Motor neuron (in vitro differentiated cells): ENCODE measurements at regions of chr2 and their contacts with region 1.

Region 1: GRCh38 chr2:149597668-149598326 is 10.2 kb upstream of the MMADHC start:
- ATAC-seq: peak; percentile 80 to 97 (median 95)
- H3K4me3 ChIP-seq: peak overlapping the region; percentile 1 to 28 (median 8)
- H3K27ac ChIP-seq: peak overlapping the region; percentile 4 to 14
- H3K4me1 ChIP-seq: peaks cover 0 to 12% of the 10 kb centered on the region in 2 donors

Region 2: DNA sequence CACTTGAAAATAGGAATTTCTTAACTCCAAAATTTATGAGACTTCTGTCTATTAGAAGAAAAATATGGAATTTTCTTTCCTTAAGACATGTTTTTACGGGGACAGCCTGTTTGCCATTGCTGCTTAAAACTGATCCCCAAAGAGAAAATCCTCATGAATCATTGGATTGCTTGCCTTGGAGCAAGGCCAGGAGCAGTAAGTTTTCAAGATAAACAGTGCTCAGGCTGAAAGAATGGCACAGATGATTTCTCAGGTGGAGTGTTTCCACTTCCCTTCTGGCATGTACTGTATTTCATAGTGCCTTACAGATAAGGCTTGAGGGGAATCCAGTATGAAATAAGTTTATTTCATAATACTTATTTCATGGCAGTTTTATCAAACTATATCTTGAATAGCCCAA is 64.0 kb after region 1 on chr2:
- in situ Hi-C with region 1: no loop called
- ATAC-seq: peak in 1 of 8 experiments; percentile 54
- H3K4me3 ChIP-seq: no peak overlapping the region
- H3K27ac ChIP-seq: no peak overlapping the region
- H3K4me1 ChIP-seq: no peaks in the 10 kb centered on the region

Region 3: DNA sequence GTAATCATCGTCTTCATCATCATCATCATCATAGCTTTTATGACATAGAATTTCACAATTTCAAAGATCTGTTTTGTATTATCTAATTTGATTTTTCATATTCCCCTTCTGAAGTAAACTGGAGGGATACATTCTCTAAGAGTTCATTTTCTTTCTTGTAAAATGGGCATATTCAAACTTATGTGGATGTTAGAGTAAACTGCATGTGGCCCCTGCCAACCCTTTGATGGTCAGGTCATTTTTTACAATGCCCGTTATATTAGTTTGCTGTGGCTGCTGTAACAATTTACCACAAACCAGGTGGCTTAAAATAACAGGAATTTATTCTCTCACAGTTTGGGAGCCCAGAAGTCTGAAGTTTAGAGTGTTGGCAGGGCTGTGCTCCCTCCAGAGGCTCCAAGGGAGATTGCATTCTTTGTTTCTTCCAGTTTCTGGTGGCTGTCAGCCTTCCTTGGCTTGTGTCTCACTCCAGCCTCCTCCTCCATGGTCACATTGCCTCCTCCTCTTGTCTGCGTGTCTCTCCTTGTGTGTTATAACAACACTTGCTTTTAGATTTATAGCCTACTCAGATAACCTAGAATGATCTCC is 117.3 kb after region 1 on chr2:
- in situ Hi-C with region 1: loop called in 2 of 9 experiments (anchors 10 to 25 kb)
- ATAC-seq: peak in 3 of 8 experiments; percentile 88 to 96 (median 96)
- H3K4me3 ChIP-seq: no peak overlapping the region
- H3K27ac ChIP-seq: no peak overlapping the region
- H3K4me1 ChIP-seq: peaks cover 0 to 1% of the 10 kb centered on the region in 2 donors

Region 4: DNA sequence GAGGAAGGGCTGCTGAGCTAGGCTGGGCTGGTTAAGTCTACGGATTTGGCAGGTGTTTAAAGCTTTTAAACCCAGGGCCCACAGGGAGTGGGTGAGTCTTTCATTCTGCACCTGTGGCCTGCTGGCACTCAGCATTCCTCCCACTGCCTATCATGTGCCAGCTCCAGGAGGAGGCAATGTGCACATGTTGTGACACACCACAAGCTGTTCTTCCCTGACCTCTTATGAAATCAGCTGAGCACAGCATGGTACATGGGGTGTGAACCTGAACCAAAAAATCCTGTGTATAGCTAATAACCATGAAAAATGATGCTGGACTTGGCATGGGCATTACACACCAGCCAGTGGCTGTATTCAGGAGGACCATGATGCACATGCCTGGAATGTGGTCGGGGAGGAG is 287.7 kb after region 1 on chr2:
- in situ Hi-C with region 1: no loop called
- ATAC-seq: no peak
- H3K4me3 ChIP-seq: no peak overlapping the region
- H3K27ac ChIP-seq: no peak overlapping the region
- H3K4me1 ChIP-seq: no peaks in the 10 kb centered on the region

Region 5: GRCh38 chr2:150271952-150272802 is 674.4 kb after region 1 on chr2:
- in situ Hi-C with region 1: loop called in 1 of 9 experiments (anchors 25 kb)
- ATAC-seq: peak in 2 of 8 experiments; percentile 81
- H3K4me3 ChIP-seq: no peak overlapping the region
- H3K27ac ChIP-seq: no peak overlapping the region
- H3K4me1 ChIP-seq: no peaks in the 10 kb centered on the region

Region 6: GRCh38 chr2:150610671-150611279 is 1013.0 kb after region 1 on chr2:
- in situ Hi-C with region 1: loop called in 1 of 9 experiments (anchors 25 kb)
- ATAC-seq: peak in 3 of 8 experiments; percentile 19 to 75 (median 38)
- H3K4me3 ChIP-seq: no peak overlapping the region
- H3K27ac ChIP-seq: no peak overlapping the region
- H3K4me1 ChIP-seq: peaks cover 0 to 7% of the 10 kb centered on the region in 2 donors

Region 7: GRCh38 chr2:151238527-151239487 is 1641.0 kb after region 1 on chr2:
- in situ Hi-C with region 1: loop called in 7 of 9 experiments (anchors 10 to 25 kb)
- ATAC-seq: peak; percentile 67 to 91 (median 80)
- H3K4me3 ChIP-seq: no peak overlapping the region
- H3K27ac ChIP-seq: no peak overlapping the region
- H3K4me1 ChIP-seq: peaks cover 0 to 23% of the 10 kb centered on the region in 2 donors

Region 8: DNA sequence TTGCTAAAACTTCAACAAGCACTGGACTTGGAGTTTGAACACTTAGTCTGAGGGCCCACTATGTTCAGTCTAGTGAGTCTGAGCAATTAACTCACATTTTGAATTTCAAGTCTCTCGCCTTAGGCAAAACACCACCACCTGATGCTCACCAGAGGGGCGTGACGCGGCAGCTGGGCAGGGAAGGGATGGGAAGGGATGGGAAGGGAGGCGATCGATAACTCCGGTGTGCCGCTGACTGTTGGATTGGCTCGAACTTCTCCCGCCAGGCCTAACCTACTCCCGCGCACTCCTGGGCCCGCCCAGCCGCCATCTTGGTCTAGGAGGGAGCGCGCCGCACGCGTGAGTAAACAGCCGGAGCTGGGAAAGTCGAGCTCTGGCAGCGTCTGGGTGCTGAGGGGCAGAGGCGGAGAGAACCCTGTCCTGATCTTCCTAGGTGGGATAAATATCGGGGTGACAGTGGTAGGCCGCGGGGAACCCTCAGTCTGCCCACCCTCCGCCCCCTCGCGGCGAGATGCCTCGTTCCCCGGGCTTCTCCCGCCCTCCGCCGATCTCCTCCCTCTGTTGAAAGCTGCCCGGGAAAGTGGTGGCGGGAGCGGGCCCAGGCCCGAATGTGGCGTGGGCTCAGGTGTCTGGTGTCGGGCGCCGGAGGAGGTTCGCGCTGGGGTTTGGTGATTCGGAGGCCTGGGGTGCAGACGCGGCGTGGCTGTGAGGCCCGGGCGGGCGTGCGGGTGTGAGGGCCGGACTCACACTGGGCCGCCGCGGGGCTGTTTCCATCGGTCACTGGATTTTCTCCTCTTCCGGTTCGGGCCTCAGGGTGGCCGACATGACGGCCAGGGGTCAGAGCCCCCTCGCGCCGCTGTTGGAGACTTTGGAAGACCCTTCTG is 1812.0 kb after region 1 on chr2 and contains the start of gene RIF1:
- in situ Hi-C with region 1: loop called in 1 of 9 experiments (anchors 25 kb)
- ATAC-seq: peak; percentile 94 to 97 (median 96)
- H3K4me3 ChIP-seq: peak within 1 kb of the TSS; percentile 75 to 100 (median 89)
- H3K27ac ChIP-seq: peak within 1 kb of the TSS; percentile 86 to 99
- H3K4me1 ChIP-seq: peaks cover 5 to 6% of the 10 kb centered on the region in 2 donors
- total RNA-seq, gene RIF1: 19.7 to 65.3 (median 29.2) TPM